HepG2 (cell line): ENCODE measurements at regions of chr16 and their contacts with region 1.

Region 1: DNA sequence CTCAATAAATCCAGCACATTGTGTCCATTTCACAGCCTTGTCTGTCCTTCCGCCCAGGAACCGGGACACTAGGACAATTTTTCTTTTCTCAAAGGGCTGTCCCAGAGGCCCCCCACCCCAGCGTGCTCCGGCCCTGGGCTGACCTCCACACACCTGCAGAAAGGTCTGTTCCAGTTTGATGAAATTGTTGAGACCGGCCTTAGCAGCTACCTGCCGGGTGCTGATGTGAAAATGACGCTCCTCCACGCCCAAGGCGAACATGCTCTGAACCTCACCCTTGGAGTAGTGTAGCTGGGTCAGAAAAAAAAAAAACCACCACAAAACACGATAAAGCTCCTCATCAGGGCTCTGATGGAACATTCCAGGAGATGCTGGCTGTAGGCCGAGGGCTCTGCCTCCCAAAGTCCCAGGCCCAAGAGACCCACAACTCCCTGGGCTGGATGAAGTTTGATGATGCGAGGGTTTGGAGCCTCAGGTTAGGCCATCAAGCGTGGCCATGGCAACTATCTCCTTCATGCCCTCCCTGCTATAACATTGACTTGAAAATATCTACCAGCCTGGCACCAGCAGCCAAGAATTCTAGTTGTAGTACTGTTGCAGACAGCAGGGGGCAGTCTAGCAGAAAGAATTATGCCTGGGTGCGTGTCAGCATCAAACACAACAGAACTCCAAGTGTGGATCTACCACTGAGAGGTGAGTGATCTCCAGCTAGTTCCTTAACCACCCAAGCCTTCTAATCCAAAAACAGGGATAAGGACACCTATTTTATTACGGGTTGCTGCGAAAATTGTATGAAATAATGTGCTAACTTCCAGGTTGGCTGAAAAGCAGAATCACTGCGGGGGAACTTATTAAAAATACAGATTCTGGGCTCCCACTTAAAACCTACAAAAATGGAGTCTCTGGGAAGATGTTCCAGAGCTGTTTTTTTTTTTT is 62.1 kb downstream of the RMI2 start:
- DNase-seq: peak; percentile 78
- ATAC-seq: peak; percentile 54
- H3K4me3 ChIP-seq: no peak overlapping the region
- H3K27ac ChIP-seq: no peak overlapping the region
- H3K4me1 ChIP-seq: peaks cover 11% of the 10 kb centered on the region
- H3K27me3 ChIP-seq: peaks cover 17 to 29% of the 10 kb centered on the region in 2 experiments; a peak in 4 of 5 replicates
- CTCF ChIP-seq: peak; percentile 96
- EP300 ChIP-seq: no peak
- POLR2A ChIP-seq: no peak
- RAD21 ChIP-seq: peak; percentile 91

Region 2: DNA sequence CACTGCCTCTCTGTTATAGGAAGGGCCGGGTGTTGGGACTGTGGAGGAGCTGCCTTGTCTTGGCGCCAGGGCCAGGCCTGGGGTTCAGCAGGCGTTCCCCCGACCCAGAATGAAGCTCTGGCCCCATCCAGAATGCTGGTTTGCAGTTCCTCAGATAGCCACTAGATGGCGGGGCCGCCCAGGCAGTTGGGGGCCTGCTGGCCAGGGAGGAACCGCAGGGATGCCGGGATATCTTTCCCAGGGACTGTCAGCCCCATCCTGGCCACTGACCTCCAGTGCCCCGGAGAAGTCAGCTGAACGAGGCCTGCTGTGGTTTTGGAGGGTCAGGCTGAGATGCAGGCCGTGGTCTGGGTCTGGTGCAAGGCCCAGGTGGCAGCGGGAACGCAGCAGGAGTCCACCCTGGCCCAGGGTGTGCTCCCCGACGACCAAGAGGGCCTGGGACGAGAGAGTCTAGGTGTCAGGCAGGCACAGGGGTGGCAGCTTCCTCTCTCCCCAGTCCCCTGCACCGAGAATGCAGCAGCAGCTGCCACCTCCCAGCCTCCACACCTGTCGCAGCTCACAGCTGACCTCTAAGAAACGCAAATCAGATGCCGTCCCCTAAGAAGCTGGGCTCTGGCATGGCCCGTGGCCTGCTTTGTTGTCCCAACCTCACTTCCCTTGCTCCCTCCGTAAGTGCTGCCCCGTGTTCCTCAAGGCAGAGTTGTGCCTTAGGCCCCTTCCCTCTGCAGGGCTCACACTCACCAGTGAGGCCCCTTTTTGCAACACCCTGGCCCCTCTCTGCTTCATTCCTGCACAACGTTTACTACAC is 10.9 kb before region 1 on chr16:
- CTCF ChIA-PET with region 1: interaction called, 15 read pairs
- POLR2A ChIA-PET with region 1: interaction called, 3 read pairs
- in situ Hi-C with region 1: no loop called
- intact Hi-C with region 1: loop called (anchors 1 kb)
- DNase-seq: peak; percentile 76
- ATAC-seq: peak; percentile 85
- H3K4me3 ChIP-seq: peak overlapping the region; percentile 53 to 79 (median 57)
- H3K27ac ChIP-seq: no peak overlapping the region
- H3K4me1 ChIP-seq: peaks cover 44% of the 10 kb centered on the region
- H3K27me3 ChIP-seq: peaks cover 48 to 74% of the 10 kb centered on the region in 2 experiments
- CTCF ChIP-seq: peak; percentile 100
- EP300 ChIP-seq: peak; percentile 23 to 34; a peak in 2 of 4 replicates
- POLR2A ChIP-seq: no peak
- RAD21 ChIP-seq: peak; percentile 99

Region 3: DNA sequence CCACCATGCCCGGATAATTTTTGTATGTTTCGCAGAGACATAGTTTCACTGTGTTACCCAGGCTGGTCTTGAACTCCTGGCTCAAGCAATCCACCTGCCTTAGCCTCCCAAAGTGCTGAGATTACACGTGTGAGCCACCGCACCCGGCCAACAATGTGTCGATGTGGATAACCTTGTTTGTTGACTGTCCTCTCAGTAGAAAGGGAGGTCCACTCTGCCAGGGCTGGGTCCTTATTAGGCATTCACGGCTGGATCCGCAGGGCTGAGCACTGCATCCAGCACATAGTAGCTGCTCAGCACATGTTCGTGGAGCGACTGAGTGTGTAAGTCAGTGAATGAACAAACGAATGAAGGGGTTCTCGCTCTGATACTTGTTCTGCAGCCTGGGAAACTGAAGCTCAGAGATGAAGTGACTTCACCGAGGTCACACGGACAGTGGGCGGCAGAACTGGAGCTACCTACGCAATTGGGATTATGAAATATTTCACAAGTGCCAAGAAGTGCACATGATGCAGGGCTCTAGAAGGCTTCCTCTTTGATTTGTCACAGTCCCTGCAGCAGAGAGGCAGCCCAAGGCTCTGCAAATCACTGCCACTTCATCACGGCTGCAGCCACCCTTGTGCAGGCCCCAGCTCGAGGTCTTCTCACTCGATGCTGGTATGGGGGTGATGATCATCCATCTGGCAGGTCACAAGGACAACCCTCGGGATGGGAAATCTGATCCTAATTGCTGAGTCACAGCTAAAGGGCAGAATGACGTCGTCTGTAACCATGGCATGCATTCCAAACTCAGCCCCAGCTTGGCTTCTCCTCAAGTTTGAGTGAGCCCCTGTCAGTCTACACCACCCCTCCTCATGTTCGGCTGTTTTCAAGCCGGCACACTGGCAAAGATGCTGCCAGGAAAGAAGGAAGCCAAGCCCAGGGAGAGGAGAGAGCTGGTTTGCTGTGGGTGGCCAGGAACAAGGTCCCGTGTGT is 232.9 kb after region 1 on chr16:
- CTCF ChIA-PET with region 1: interaction called, 13 read pairs
- POLR2A ChIA-PET with region 1: interaction called, 5 read pairs
- in situ Hi-C with region 1: loop called (anchors 5 kb)
- intact Hi-C with region 1: loop called (anchors 1 kb)
- DNase-seq: peak; percentile 90
- ATAC-seq: peak; percentile 75
- H3K4me3 ChIP-seq: peak overlapping the region in 1 of 3 experiments; percentile 63; a peak in 2 of 6 replicates
- H3K27ac ChIP-seq: peak overlapping the region; percentile 0
- H3K4me1 ChIP-seq: peaks cover 34% of the 10 kb centered on the region
- H3K27me3 ChIP-seq: peaks cover 0 to 11% of the 10 kb centered on the region in 2 experiments; a peak in 2 of 5 replicates
- CTCF ChIP-seq: no peak; the same call in none of the 2 replicates
- EP300 ChIP-seq: peak in 1 of 2 experiments; percentile 90; a peak in 2 of 4 replicates
- POLR2A ChIP-seq: peak in 1 of 2 experiments; percentile 63; a peak in 1 of 4 replicates
- RAD21 ChIP-seq: no peak

Region 4: GRCh38 chr16:11715246-11715947 is 308.1 kb after region 1 on chr16:
- CTCF ChIA-PET with region 1: interaction called, 8 read pairs
- POLR2A ChIA-PET with region 1: no interaction called
- in situ Hi-C with region 1: no loop called
- intact Hi-C with region 1: loop called (anchors 2 kb)
- DNase-seq: peak; percentile 15
- ATAC-seq: peak; percentile 35
- H3K4me3 ChIP-seq: no peak overlapping the region
- H3K27ac ChIP-seq: peak overlapping the region; percentile 34
- H3K4me1 ChIP-seq: peaks cover 41% of the 10 kb centered on the region
- H3K27me3 ChIP-seq: no peaks in the 10 kb centered on the region
- CTCF ChIP-seq: peak; percentile 20; the same call in 1 of the 2 replicates
- EP300 ChIP-seq: no peak
- POLR2A ChIP-seq: no peak
- RAD21 ChIP-seq: no peak

Region 5: GRCh38 chr16:12067714-12068401 is 660.5 kb after region 1 on chr16:
- CTCF ChIA-PET with region 1: interaction called, 3 read pairs
- POLR2A ChIA-PET with region 1: no interaction called
- in situ Hi-C with region 1: no loop called
- intact Hi-C with region 1: loop called (anchors 10 kb)
- DNase-seq: peak; percentile 84
- ATAC-seq: peak; percentile 85
- H3K4me3 ChIP-seq: no peak overlapping the region
- H3K27ac ChIP-seq: no peak overlapping the region
- H3K4me1 ChIP-seq: 0 out of 2 replicates have a peak, but pooled peaks cover 4% of the 10 kb centered on the region
- H3K27me3 ChIP-seq: no peaks in the 10 kb centered on the region
- CTCF ChIP-seq: peak; percentile 99
- EP300 ChIP-seq: no peak
- POLR2A ChIP-seq: no peak
- RAD21 ChIP-seq: peak; percentile 98